Left lung (tissue), 14 donors: ENCODE measurements at regions of chr14 and their contacts with region 1.

Region 1: GRCh38 chr14:52473557-52473956 is 78.7 kb downstream of the TXNDC16 start:
- DNase-seq: peak in 1 of 4 donors; percentile 27
- ATAC-seq: peak; percentile 67
- H3K4me3 ChIP-seq: no peak overlapping the region
- H3K27ac ChIP-seq: no peak overlapping the region
- H3K4me1 ChIP-seq: no peaks in the 10 kb centered on the region
- H3K27me3 ChIP-seq: no peaks in the 10 kb centered on the region
- CTCF ChIP-seq: peak; percentile 19 to 31

Region 2: GRCh38 chr14:52131640-52132320 is 341.8 kb before region 1 on chr14:
- intact Hi-C with region 1: no loop called
- DNase-seq: peak in 3 of 4 donors; percentile 61 to 94 (median 86)
- ATAC-seq: peak; percentile 83
- H3K4me3 ChIP-seq: no peak overlapping the region
- H3K27ac ChIP-seq: no peak overlapping the region
- H3K4me1 ChIP-seq: peaks cover 0 to 5% of the 10 kb centered on the region in 2 donors
- H3K27me3 ChIP-seq: no peaks in the 10 kb centered on the region
- CTCF ChIP-seq: peak; percentile 42 to 60

Region 3: GRCh38 chr14:52299692-52300278 is 173.8 kb before region 1 on chr14:
- intact Hi-C with region 1: loop called in 1 of 2 experiments (anchors 10 kb)
- DNase-seq: peak in 2 of 4 donors; percentile 49 to 65
- ATAC-seq: peak; percentile 82
- H3K4me3 ChIP-seq: no peak overlapping the region
- H3K27ac ChIP-seq: no peak overlapping the region
- H3K4me1 ChIP-seq: peaks cover 0 to 8% of the 10 kb centered on the region in 2 donors
- H3K27me3 ChIP-seq: no peaks in the 10 kb centered on the region
- CTCF ChIP-seq: peak; percentile 57 to 64

Region 4: DNA sequence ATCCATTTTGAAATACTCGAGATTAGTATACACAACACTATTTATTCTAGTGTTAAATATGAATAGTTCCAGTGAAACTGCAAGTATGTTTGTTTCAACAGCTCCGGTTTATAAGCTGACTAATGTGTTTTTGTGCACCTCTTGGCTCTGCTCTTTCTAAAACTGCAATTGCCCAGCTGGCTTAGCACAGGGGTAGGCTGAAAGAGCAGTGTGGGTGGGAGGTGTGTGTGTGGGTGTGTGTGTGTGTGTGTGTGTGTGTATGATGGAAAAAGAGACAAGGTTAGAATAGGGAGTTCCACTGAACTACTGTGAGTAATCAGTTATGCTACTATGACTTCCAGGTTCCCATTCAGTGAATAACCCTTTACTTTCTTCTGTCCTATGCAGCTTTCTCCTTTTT is 717.4 kb after region 1 on chr14:
- intact Hi-C with region 1: no loop called
- DNase-seq: no peak
- ATAC-seq: no peak
- H3K4me3 ChIP-seq: no peak overlapping the region
- H3K27ac ChIP-seq: no peak overlapping the region
- H3K4me1 ChIP-seq: no peaks in the 10 kb centered on the region
- H3K27me3 ChIP-seq: no peaks in the 10 kb centered on the region
- CTCF ChIP-seq: no peak